Lower leg skin (tissue), 4 donors: ENCODE measurements at regions of chr16 and their contacts with region 1.

Region 1: DNA sequence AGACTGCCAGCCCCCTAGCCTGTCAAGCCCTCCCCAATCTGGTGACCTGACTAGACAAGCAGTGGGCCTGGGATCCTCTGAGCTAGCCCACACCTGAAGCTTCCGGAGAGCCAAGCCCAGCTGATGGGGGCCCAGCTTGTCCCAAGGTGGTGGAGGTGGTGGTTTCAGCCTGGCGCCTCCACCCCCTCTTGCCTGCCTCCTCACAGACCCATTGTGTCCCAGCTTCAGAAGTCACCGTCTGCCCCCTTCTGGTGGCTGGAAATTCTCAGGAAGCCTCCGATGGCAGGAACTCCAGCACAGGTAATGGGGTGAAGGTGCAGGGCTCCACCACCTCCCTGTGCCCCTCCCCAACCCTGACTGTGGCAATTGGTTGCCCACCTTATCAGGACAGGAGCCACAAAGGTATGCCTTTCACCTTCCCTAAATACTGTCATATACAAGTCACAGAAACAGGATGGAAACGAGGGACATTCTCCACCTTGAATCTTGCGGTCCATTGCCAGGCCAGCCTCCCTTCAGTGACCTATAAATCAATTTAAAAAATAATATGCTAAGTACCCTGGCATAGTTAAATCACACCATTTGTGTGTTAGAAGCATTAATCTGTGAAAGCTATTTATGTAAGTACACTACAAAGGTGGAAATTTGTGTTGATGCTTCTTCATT is 66.0 kb upstream of the ZNF423 start:
- DNase-seq: peak; percentile 30 to 88
- H3K4me3 ChIP-seq: no peak overlapping the region
- CTCF ChIP-seq: no peak
- POLR2A ChIP-seq: no peak

Region 2: DNA sequence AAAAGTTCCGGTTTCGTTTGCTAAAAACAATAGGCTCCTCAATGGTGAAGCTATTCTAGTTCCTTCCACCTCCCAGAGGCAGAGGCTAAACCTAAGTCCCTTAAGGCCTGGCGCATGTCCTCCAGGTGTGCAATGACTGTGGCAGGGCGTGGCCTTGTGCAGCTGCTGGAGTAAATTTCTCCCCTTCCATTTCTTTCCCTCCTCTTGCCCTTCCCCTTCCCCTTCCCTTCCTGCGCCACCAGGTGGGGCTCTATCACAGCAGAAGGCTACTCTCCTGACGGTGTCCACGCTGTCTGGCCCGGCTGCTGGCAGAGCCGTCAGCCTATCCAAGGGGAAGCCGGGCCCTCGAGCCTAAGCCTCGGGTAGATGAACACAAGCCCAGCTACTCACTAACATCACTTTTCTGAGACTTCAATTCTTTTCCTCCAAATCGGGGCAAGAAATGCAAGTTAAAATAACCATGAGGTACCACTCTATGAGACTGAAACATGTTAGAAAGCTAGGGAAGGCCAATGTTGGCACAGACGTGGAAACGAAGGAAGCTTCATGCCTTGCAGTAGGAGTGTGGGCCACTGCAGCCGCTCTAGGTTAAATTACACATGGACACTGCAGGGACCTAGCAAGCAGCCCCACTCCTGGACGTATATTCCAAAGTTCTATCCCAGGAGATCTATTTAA is 513.9 kb before region 1 on chr16:
- intact Hi-C with region 1: loop called (anchors 10 kb)
- DNase-seq: peak; percentile 57 to 96
- H3K4me3 ChIP-seq: no peak overlapping the region
- CTCF ChIP-seq: peak in 1 of 3 donors; percentile 82
- POLR2A ChIP-seq: no peak

Region 3: DNA sequence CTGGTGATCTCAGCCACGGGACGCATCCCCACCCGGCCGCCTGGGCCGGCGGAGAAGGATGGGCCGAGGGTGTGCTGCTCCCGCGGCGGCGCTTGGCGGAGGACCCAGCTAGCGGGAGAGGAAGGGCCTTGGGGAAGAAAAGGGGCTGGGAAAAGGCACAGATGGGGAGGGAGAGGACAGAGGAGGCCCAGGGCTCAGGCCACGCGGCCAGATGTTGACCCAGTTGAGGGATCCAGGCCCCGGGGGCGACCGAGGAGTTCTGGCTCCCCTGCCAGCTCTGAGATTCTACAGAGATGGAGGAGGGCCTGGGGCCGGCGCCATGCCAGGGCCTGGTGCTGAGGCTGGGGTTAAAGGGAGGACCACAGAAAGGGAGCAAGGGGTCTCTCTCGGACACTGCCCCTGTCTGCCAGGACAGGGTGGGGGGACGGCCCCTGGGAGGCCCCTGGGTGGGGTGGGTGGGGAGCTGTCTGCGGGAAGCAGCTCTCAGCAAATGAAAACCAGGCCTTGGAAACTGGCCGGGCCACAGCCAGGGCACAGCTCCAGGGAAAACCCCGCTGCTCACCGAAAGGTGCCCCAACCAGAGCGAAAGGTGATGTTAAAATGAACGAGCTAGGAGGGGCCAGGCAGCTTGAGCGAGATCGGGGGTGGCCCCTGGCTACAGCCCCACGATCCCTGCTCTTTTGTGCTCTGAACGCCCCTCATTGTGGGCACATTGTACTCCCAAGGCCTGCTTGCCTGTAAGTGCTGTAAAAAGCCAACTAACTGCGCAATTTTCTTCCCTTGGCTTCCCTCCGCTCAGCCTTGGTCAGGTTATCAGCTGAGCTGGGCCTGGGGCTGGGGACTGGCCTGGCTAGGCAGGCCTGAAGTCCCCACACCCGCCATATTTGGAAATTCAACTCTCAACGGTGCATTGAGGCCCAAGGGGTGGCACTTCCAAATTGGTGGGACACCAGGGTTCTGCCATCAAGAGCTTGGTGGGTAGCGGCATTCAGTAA is 257.4 kb before region 1 on chr16:
- intact Hi-C with region 1: no loop called
- DNase-seq: no peak
- H3K4me3 ChIP-seq: no peak overlapping the region
- CTCF ChIP-seq: no peak
- POLR2A ChIP-seq: no peak